ENCODE measurements at regions of chr17 and their contacts with region 1.

Region 1: DNA sequence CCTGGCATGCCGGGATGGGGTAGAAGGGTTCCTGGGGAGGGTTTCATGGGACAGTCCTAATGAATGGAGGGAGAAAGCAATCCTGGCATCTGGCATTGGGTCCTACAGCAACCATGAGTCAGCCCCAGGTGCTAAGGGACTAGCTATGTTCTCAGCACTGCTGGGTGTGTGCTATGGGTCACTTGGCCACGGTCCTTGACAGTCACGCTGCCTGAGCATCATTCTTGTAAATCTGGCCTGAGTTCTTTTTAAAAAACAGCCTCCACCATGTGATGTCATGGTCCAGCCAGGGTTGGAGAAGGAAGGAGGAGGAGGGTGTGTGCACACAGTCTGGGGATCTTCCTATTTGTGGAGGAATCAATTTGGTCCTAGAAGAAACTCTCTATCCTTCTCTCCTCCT is 6.2 kb upstream of the RAMP2 start:
- DNase-seq: no peak
- ATAC-seq: no peak
- H3K4me3 ChIP-seq: no peak overlapping the region
- H3K27ac ChIP-seq: no peak overlapping the region
- H3K4me1 ChIP-seq: peaks cover 2% of the 10 kb centered on the region; the same call in 1 of the 2 replicates
- H3K27me3 ChIP-seq: no peaks in the 10 kb centered on the region; a peak in 1 of 4 replicates
- CTCF ChIP-seq: no peak
- EP300 ChIP-seq: no peak
- POLR2A ChIP-seq: no peak
- RAD21 ChIP-seq: no peak

Region 2: GRCh38 chr17:42809250-42809649 is 54.5 kb after region 1 on chr17:
- CTCF ChIA-PET with region 1: no interaction called
- POLR2A ChIA-PET with region 1: no interaction called
- RAD21 ChIA-PET with region 1: no interaction called
- SMC1A ChIA-PET with region 1: no interaction called
- in situ Hi-C with region 1: loop called (anchors 5 kb)
- intact Hi-C with region 1: no loop called
- DNase-seq: no peak
- ATAC-seq: no peak
- H3K4me3 ChIP-seq: no peak overlapping the region
- H3K27ac ChIP-seq: no peak overlapping the region
- H3K4me1 ChIP-seq: no peaks in the 10 kb centered on the region
- H3K27me3 ChIP-seq: no peaks in the 10 kb centered on the region
- CTCF ChIP-seq: no peak
- EP300 ChIP-seq: no peak
- POLR2A ChIP-seq: no peak
- RAD21 ChIP-seq: no peak